Ascending aorta (tissue), 2 donors: ENCODE measurements at regions of chr7 and their contacts with region 1.

Region 1: DNA sequence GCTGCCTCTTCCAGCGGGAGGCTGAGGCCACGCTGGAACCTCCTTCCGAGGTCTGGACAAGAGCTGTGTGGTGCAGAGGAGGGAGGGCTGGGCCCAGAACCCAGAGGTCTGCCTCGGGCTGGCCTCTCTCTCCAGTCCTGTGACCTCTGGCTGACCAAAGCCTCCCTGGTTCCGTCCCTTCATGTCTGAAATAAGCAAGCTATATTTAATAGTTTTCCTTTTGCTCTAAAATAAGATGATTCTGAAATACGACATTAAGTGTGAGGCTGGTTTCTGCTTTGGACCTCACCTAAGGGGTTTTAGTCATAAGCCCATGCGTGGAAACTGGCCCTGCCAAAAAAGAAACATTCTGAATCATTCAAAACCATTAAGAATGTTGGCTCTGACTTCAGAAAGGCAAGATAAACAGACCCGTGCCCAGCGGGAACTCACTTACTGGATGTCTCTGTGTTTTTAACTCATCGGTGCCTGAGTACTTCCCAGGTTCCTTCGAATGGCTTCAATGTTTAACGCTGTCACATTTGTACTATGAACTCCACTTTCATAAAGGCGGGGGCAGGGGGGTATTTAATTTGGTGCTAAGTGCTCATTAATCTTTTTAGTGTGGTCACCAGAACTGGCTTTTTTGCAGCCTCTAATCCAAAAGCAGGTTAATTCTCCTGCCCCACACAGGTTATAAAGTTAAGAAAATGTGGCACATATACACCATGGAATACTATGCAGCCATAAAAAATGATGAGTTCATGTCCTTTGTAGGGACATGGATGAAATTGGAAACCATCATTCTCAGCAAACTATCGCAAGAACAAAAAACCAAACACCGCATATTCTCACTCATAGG is 157.5 kb upstream of the KLF14 start:
- DNase-seq: peak in 1 of 2 donors; percentile 94
- H3K4me3 ChIP-seq: peak overlapping the region in 1 of 2 donors; percentile 49
- H3K27ac ChIP-seq: peak overlapping the region; percentile 95 to 97
- H3K4me1 ChIP-seq: peaks cover 16 to 56% of the 10 kb centered on the region in 2 donors
- H3K27me3 ChIP-seq: no peaks in the 10 kb centered on the region
- CTCF ChIP-seq: no peak

Region 2: DNA sequence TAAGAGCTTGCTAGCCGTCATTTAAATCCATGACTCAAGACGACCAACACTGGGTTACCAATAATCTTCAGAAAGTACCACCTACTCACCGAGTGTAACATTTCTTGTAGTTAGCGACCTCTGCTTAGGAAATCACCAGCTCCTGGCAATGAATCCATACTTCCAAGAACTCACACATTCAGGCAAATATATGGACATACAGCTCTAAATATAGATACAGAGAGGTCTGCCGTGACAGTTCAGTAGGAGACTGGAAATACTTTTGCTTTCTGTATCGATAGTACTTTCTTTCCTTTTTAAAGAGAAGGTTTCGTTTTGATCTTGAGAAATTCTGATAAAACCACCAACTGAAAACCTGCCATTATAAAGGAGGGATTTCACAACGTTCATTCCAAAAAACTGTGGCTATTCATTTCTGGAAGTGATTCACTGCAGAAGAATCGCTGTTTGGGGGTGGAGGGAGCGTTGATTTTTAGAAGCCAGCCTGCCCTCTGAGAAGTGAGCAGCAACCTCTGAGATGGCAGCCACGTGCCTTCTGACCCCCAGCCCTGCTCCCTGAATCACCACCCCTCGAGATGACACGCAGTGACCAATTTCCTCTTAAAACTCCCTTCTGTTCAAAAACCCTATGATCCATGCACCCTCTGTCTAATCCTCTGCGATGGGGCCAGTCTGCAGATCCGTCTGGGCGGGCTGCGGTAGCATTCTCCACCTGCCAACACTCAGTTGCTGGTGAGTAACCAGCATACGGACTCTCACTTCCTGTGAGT is 21.6 kb after region 1 on chr7:
- intact Hi-C with region 1: loop called (anchors 1 kb)
- DNase-seq: peak; percentile 69 to 95
- H3K4me3 ChIP-seq: peak overlapping the region; percentile 60 to 67
- H3K27ac ChIP-seq: peak overlapping the region; percentile 94 to 96
- H3K4me1 ChIP-seq: peaks cover 13 to 63% of the 10 kb centered on the region in 2 donors
- H3K27me3 ChIP-seq: no peaks in the 10 kb centered on the region
- CTCF ChIP-seq: no peak